Heart left ventricle (tissue), 16 donors: ENCODE measurements at regions of chr11 and their contacts with region 1.

Region 1: GRCh38 chr11:47285969-47286770 is 16.2 kb downstream of the MADD start:
- DNase-seq: no peak
- ATAC-seq: peak; percentile 18 to 70 (median 36)
- H3K4me3 ChIP-seq: no peak overlapping the region
- H3K27ac ChIP-seq: peak overlapping the region in 9 of 12 donors; percentile 26 to 85 (median 54)
- H3K4me1 ChIP-seq: peaks cover 0 to 39% (median 6%) of the 10 kb centered on the region in 12 donors
- H3K27me3 ChIP-seq: no peaks in the 10 kb centered on the region
- CTCF ChIP-seq: no peak
- POLR2A ChIP-seq: no peak

Region 2: GRCh38 chr11:47186076-47186936 is 99.9 kb before region 1 on chr11 and contains the start of gene PACSIN3:
- intact Hi-C with region 1: no loop called
- DNase-seq: peak; percentile 59 to 80 (median 67)
- ATAC-seq: peak in 2 of 4 donors; percentile 51 to 55
- H3K4me3 ChIP-seq: peak within 1 kb of the TSS; percentile 62 to 95 (median 82)
- H3K27ac ChIP-seq: peak within 1 kb of the TSS; percentile 89 to 100 (median 96)
- H3K4me1 ChIP-seq: peaks cover 0 to 75% (median 28%) of the 10 kb centered on the region in 12 donors
- H3K27me3 ChIP-seq: peaks cover 0 to 43% (median 0%) of the 10 kb centered on the region in 9 donors
- CTCF ChIP-seq: peak in 3 of 12 donors; percentile 13 to 39 (median 15)
- POLR2A ChIP-seq: peak in 1 of 2 donors; percentile 12
- total RNA-seq, gene PACSIN3: 127 to 330 (median 211) TPM

Region 3: GRCh38 chr11:47305734-47306483 is 19.7 kb after region 1 on chr11:
- intact Hi-C with region 1: loop called in 1 of 10 experiments (anchors 2 kb)
- DNase-seq: peak; percentile 70 to 91 (median 78)
- ATAC-seq: peak; percentile 98 to 99 (median 98)
- H3K4me3 ChIP-seq: no peak overlapping the region
- H3K27ac ChIP-seq: peak overlapping the region in 11 of 12 donors; percentile 63 to 93 (median 77)
- H3K4me1 ChIP-seq: peaks cover 0 to 32% (median 15%) of the 10 kb centered on the region in 12 donors
- H3K27me3 ChIP-seq: no peaks in the 10 kb centered on the region
- CTCF ChIP-seq: no peak
- POLR2A ChIP-seq: no peak

Region 4: GRCh38 chr11:47324520-47324919 is 38.4 kb after region 1 on chr11:
- intact Hi-C with region 1: loop called in 1 of 10 experiments (anchors 5 kb)
- DNase-seq: no peak
- ATAC-seq: peak in 2 of 4 donors; percentile 0 to 2
- H3K4me3 ChIP-seq: no peak overlapping the region
- H3K27ac ChIP-seq: no peak overlapping the region
- H3K4me1 ChIP-seq: peaks cover 0 to 26% (median 15%) of the 10 kb centered on the region in 12 donors
- H3K27me3 ChIP-seq: no peaks in the 10 kb centered on the region
- CTCF ChIP-seq: no peak
- POLR2A ChIP-seq: no peak